CD4-positive, alpha-beta T cell (primary cell): ENCODE measurements at regions of chr10 and their contacts with region 1.

Region 1: DNA sequence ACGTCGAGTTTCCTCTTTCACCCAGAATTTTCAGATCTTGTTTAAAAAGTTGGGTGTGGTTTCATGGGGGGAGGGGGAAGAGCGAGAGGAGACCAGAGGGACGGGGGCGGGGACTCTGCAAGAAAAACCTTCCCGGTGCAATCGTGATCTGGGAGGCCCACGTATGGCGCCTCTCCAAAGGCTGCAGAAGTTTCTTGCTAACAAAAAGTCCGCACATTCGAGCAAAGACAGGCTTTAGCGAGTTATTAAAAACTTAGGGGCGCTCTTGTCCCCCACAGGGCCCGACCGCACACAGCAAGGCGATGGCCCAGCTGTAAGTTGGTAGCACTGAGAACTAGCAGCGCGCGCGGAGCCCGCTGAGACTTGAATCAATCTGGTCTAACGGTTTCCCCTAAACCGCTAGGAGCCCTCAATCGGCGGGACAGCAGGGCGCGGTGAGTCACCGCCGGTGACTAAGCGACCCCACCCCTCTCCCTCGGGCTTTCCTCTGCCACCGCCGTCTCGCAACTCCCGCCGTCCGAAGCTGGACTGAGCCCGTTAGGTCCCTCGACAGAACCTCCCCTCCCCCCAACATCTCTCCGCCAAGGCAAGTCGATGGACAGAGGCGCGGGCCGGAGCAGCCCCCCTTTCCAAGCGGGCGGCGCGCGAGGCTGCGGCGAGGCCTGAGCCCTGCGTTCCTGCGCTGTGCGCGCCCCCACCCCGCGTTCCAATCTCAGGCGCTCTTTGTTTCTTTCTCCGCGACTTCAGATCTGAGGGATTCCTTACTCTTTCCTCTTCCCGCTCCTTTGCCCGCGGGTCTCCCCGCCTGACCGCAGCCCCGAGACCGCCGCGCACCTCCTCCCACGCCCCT is at the start of gene VIM:
- DNase-seq: peak; percentile 66 to 95 (median 86)
- ATAC-seq: peak; percentile 26
- H3K4me3 ChIP-seq: peak within 1 kb of the TSS; percentile 94
- H3K4me3 Mint-ChIP-seq: peak within 1 kb of the TSS; percentile 86
- H3K27ac ChIP-seq: peak within 1 kb of the TSS; percentile 93 to 100
- H3K27ac Mint-ChIP-seq: peak within 1 kb of the TSS; percentile 98
- H3K4me1 ChIP-seq: peaks cover 42% of the 10 kb centered on the region
- H3K4me1 Mint-ChIP-seq: peaks cover 61% of the 10 kb centered on the region
- H3K27me3 ChIP-seq: no peaks in the 10 kb centered on the region
- H3K27me3 Mint-ChIP-seq: no peaks in the 10 kb centered on the region
- CTCF ChIP-seq: no peak
- total RNA-seq, gene VIM: 1,576 to 1,603 TPM

Region 2: DNA sequence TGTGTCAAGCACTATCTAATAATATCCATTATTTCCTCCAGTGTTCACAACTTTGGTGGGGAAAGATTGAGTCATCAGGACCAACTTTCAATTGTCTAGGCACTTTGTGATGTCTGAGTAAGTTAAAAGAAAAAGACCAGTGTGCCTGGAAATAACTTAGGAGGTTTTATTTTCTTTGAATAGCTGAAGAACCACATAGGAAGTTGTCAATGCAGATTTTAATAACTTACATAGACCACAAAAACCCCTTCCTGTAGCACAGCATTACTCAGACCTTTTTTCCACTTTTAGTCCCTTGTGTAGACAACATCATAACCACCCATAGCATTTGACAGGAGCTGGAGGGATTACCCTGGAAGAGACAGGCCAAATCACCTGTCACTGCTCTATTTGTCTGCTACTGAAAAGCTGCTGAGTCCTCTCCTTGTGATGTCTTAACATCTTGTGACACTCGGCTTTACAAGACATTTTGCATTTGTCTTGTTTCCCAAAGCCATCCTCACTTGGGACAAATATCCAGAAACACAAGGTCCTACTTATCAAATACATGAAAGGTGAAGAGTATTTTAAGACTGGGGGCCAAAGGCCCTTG is 1033.0 kb before region 1 on chr10:
- CTCF ChIA-PET with region 1: no interaction called
- POLR2A ChIA-PET with region 1: no interaction called
- intact Hi-C with region 1: no loop called
- DNase-seq: peak in 1 of 14 experiments; percentile 38
- ATAC-seq: no peak
- H3K4me3 ChIP-seq: no peak overlapping the region
- H3K4me3 Mint-ChIP-seq: no peak overlapping the region
- H3K27ac ChIP-seq: no peak overlapping the region
- H3K27ac Mint-ChIP-seq: no peak overlapping the region
- H3K4me1 ChIP-seq: no peaks in the 10 kb centered on the region
- H3K4me1 Mint-ChIP-seq: peaks cover 8% of the 10 kb centered on the region
- H3K27me3 ChIP-seq: no peaks in the 10 kb centered on the region
- H3K27me3 Mint-ChIP-seq: peaks cover 9% of the 10 kb centered on the region
- CTCF ChIP-seq: no peak

Region 3: GRCh38 chr10:16915300-16915699 is 313.0 kb before region 1 on chr10:
- CTCF ChIA-PET with region 1: no interaction called
- POLR2A ChIA-PET with region 1: no interaction called
- intact Hi-C with region 1: loop called (anchors 5 kb)
- DNase-seq: peak in 3 of 14 experiments; percentile 14 to 38 (median 28)
- ATAC-seq: peak; percentile 41
- H3K4me3 ChIP-seq: no peak overlapping the region
- H3K4me3 Mint-ChIP-seq: no peak overlapping the region
- H3K27ac ChIP-seq: no peak overlapping the region
- H3K27ac Mint-ChIP-seq: no peak overlapping the region
- H3K4me1 ChIP-seq: no peaks in the 10 kb centered on the region
- H3K4me1 Mint-ChIP-seq: no peaks in the 10 kb centered on the region
- H3K27me3 ChIP-seq: no peaks in the 10 kb centered on the region
- H3K27me3 Mint-ChIP-seq: no peaks in the 10 kb centered on the region
- CTCF ChIP-seq: no peak

Region 4: DNA sequence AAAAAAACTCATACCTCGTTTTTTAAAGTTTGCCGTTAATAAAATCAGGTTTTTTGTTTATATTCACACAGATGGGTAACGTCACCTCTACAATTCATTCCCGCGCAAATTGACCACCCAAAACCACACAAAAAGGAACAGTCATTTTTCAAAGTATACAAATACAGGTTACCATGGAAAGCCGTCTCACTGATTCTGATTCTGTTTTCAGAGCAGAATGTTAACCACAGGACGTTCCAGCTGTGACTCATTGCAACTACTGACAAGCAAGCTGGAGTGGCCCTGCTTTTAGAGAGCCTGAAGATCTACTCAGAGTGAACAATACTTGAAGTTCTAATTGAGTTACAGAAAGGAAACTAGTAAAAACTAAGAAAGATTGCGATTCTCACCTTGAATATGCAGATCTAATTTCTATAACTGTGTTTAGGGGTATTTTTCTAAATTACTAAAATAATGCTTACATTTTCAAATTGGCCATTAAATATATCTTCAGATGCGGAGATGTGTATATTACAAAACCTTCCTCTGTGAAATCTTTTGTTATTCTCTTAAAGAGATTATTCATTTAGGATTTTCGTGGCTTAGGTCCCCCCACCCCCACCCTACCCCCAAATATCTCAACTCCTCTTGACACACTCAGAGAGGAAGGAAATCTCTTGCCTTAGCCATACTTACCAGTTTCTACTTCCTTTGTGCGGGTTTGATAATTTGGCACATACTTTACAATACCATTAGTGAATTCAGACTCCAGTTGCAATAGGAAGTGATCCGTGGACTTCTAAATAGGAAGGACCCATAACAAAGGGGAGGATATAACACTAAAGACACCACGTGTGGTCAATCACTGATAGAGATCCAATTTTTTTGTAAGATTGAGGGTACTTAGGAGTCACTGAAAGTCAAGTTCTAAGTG is 204.7 kb before region 1 on chr10:
- CTCF ChIA-PET with region 1: interaction called, 4 read pairs
- POLR2A ChIA-PET with region 1: interaction called, 22 read pairs
- intact Hi-C with region 1: loop called (anchors 2 to 5 kb)
- DNase-seq: peak; percentile 46 to 95 (median 66)
- ATAC-seq: peak; percentile 74
- H3K4me3 ChIP-seq: no peak overlapping the region
- H3K4me3 Mint-ChIP-seq: peak overlapping the region; percentile 43
- H3K27ac ChIP-seq: peak overlapping the region; percentile 83 to 89
- H3K27ac Mint-ChIP-seq: peak overlapping the region; percentile 83
- H3K4me1 ChIP-seq: peaks cover 46% of the 10 kb centered on the region
- H3K4me1 Mint-ChIP-seq: peaks cover 62% of the 10 kb centered on the region
- H3K27me3 ChIP-seq: no peaks in the 10 kb centered on the region
- H3K27me3 Mint-ChIP-seq: no peaks in the 10 kb centered on the region
- CTCF ChIP-seq: no peak

Region 5: DNA sequence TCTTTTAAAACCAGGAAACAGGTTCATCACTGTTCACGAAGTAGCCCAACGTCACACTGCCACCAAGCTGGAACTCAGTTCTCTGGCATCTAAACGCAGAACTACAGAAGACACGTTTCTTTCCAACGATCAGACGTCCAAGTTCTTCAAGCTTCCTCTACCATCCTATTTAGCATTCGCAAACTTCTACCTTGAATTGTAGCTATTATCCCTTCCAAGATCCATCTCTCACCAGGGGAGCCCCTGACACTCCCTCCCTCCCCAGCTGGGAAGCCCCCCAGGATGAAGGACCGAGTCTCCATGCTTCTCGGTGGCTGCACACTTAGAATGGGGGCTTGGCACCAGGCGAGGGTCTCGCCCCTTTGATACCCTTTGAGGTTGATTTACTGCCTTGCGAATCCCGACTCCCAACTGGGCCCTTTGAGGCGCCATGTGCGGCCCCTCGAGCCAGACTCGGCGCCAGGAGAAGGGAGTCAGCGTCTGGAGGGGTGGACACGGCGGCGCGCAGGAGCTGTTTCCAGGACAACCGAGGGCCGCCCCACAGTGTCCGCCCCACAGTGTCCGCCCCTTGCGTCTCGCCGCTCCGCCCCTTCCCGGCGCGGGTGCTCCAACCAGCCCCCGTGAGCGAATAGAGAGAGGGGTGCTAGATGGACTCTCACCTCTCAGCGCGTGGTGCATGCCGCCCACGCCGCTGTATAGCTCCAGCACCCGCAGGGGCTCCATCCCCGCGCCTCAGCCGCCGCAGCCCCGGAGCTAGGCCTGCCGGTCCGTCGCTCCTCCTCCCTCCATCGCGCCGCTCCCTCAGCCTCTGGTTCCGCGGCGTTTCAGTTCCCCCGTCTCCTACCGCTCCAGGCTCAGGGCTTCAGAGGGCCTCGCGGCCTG is 27.2 kb before region 1 on chr10 and contains the start of gene TRDMT1:
- CTCF ChIA-PET with region 1: interaction called, 47 read pairs
- POLR2A ChIA-PET with region 1: interaction called, 375 read pairs
- intact Hi-C with region 1: loop called (anchors 1 kb)
- DNase-seq: peak; percentile 62 to 89 (median 72)
- ATAC-seq: peak; percentile 66
- H3K4me3 ChIP-seq: peak within 1 kb of the TSS; percentile 69
- H3K4me3 Mint-ChIP-seq: peak within 1 kb of the TSS; percentile 89
- H3K27ac ChIP-seq: peak within 1 kb of the TSS; percentile 72 to 89
- H3K27ac Mint-ChIP-seq: peak within 1 kb of the TSS; percentile 96
- H3K4me1 ChIP-seq: peaks cover 21% of the 10 kb centered on the region
- H3K4me1 Mint-ChIP-seq: peaks cover 46% of the 10 kb centered on the region
- H3K27me3 ChIP-seq: no peaks in the 10 kb centered on the region
- H3K27me3 Mint-ChIP-seq: no peaks in the 10 kb centered on the region
- CTCF ChIP-seq: peak; percentile 8
- total RNA-seq, gene TRDMT1: 20.3 to 21.3 TPM

Region 6: DNA sequence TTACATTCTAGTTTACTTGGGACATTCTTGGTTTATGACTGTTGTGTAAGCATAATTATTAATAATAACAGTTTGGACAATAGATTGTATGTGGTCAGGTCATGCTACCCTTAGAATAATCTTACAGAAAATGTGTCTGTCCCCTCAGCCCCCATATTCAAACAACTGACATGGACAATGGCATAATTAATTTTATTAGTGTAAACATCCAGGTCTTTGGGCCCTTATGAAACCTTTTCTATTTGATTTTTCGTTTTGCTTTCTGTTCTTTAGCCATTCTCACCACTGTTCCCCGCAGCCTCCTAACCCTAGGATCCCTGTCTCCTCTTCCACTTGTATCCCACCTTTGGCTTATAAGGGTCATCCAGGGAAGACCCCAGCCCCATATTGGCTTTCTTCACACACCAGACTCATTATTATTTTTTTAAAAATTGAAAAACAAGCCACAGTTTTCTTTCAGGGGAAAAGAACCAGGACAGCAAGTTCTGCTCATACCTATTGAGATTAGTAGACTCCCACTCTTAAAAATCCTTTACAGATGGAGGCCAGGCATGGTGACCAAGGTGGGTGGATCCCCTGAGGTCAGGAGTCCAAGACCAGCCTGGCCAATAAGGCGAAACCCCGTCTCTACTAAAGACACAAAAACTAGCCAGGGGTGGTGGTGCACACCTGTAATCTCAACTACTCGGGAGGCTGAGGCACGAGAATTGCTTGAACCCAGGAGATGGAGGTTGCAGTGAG is 11.2 kb after region 1 on chr10:
- CTCF ChIA-PET with region 1: interaction called, 3 read pairs
- POLR2A ChIA-PET with region 1: interaction called, 28 read pairs
- intact Hi-C with region 1: no loop called
- DNase-seq: no peak
- ATAC-seq: no peak
- H3K4me3 ChIP-seq: no peak overlapping the region
- H3K4me3 Mint-ChIP-seq: no peak overlapping the region
- H3K27ac ChIP-seq: no peak overlapping the region
- H3K27ac Mint-ChIP-seq: peak overlapping the region; percentile 30
- H3K4me1 ChIP-seq: peaks cover 21% of the 10 kb centered on the region
- H3K4me1 Mint-ChIP-seq: peaks cover 51% of the 10 kb centered on the region
- H3K27me3 ChIP-seq: no peaks in the 10 kb centered on the region
- H3K27me3 Mint-ChIP-seq: no peaks in the 10 kb centered on the region
- CTCF ChIP-seq: no peak

Region 7: DNA sequence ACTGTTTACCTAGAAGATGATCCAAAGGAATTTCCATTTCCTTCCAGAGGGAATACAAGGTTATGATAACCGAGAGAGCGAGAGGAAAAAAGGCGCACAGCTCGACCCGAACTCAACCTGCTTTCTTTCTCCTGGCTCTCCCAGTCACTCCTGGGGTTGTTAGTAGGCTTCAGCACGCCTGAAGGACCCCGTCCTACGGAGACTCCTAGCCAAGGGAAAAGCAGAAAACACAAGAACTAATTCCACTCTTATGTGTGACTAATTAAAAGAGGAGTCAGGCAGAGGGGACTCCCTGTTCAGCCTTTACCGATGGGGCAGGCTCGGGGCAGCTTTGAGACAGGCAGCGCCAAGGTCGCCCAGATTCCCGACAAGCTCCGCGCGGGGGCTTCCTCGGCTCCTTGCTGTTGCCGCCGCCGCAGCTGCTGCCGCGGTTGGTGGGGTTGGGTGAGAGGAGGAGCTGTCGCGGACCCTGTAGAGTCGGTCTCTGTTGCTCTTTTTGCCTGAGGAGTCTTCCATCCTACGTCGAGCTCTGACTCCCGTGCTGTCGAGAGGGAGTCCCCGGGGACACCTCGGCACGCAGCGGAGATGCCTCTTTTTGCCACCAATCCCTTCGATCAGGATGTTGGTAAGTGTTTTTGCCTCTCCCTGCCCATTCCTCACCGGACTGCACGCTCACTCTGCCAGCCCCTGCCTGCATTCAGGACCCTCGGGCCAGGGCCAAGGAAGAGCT is 415.6 kb after region 1 on chr10 and contains the start of gene STAM:
- CTCF ChIA-PET with region 1: no interaction called
- POLR2A ChIA-PET with region 1: interaction called, 11 read pairs
- intact Hi-C with region 1: no loop called
- DNase-seq: peak; percentile 88 to 96 (median 91)
- ATAC-seq: peak; percentile 88
- H3K4me3 ChIP-seq: peak within 1 kb of the TSS; percentile 75
- H3K4me3 Mint-ChIP-seq: peak within 1 kb of the TSS; percentile 98
- H3K27ac ChIP-seq: peak within 1 kb of the TSS; percentile 96
- H3K27ac Mint-ChIP-seq: peak within 1 kb of the TSS; percentile 100
- H3K4me1 ChIP-seq: peaks cover 41% of the 10 kb centered on the region
- H3K4me1 Mint-ChIP-seq: peaks cover 60% of the 10 kb centered on the region
- H3K27me3 ChIP-seq: no peaks in the 10 kb centered on the region
- H3K27me3 Mint-ChIP-seq: no peaks in the 10 kb centered on the region
- CTCF ChIP-seq: no peak
- total RNA-seq, gene STAM: 52.4 to 53.3 TPM

Region 8: GRCh38 chr10:17961551-17962422 is 733.5 kb after region 1 on chr10:
- CTCF ChIA-PET with region 1: no interaction called
- POLR2A ChIA-PET with region 1: no interaction called
- intact Hi-C with region 1: no loop called
- DNase-seq: no peak
- ATAC-seq: no peak
- H3K4me3 ChIP-seq: no peak overlapping the region
- H3K4me3 Mint-ChIP-seq: no peak overlapping the region
- H3K27ac ChIP-seq: no peak overlapping the region
- H3K27ac Mint-ChIP-seq: no peak overlapping the region
- H3K4me1 ChIP-seq: no peaks in the 10 kb centered on the region
- H3K4me1 Mint-ChIP-seq: no peaks in the 10 kb centered on the region
- H3K27me3 ChIP-seq: no peaks in the 10 kb centered on the region
- H3K27me3 Mint-ChIP-seq: peaks cover 15% of the 10 kb centered on the region
- CTCF ChIP-seq: no peak